WTC11 (cell line): ENCODE measurements at regions of chr9 and their contacts with region 1.

Region 1: GRCh38 chr9:131334629-131335367 is 45.3 kb downstream of the PLPP7 start:
- DNase-seq: peak; percentile 16
- ATAC-seq: peak; percentile 10; the same call in 1 of the 2 replicates
- H3K4me3 Mint-ChIP-seq: no peak overlapping the region
- H3K27ac Mint-ChIP-seq: no peak overlapping the region
- H3K4me1 Mint-ChIP-seq: peaks cover 23% of the 10 kb centered on the region
- H3K27me3 Mint-ChIP-seq: no peaks in the 10 kb centered on the region
- CTCF ChIP-seq: no peak

Region 2: DNA sequence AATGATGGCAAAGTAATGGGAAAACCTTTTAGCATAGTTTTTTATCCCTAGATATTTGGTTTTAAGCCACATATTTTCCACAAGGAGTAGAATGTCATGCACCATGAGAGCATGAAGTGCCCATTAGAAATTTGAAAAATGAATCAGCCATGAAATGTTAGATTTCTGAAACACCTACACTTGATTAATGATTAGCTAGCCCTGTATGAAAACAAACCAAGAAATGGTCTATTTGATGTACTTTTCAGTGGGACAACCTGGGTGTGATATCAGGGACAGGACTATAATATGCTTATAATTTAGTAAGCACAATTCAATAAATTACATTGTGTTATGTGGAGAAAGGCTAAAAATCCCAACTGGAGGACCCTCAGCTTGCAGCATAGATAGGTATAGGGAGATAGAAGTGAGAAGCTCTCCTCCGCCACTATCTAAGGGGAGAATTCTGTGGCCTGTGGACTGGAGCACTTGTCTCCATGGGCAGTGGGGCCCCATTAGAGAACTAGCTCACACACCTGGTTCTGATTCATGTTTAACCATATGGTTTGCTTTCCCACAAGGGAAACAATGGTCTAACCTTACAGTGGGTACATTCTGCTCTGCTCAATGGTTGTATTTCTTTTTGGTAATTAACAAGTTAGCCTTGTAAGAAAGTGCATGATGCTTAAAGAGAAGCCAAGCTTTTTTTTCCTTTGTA is 174.2 kb before region 1 on chr9:
- CTCF ChIA-PET with region 1: interaction called, 13 read pairs
- POLR2A ChIA-PET with region 1: no interaction called
- DNase-seq: no peak
- ATAC-seq: no peak
- H3K4me3 Mint-ChIP-seq: no peak overlapping the region
- H3K27ac Mint-ChIP-seq: no peak overlapping the region
- H3K4me1 Mint-ChIP-seq: no peaks in the 10 kb centered on the region
- H3K27me3 Mint-ChIP-seq: no peaks in the 10 kb centered on the region
- CTCF ChIP-seq: no peak

Region 3: DNA sequence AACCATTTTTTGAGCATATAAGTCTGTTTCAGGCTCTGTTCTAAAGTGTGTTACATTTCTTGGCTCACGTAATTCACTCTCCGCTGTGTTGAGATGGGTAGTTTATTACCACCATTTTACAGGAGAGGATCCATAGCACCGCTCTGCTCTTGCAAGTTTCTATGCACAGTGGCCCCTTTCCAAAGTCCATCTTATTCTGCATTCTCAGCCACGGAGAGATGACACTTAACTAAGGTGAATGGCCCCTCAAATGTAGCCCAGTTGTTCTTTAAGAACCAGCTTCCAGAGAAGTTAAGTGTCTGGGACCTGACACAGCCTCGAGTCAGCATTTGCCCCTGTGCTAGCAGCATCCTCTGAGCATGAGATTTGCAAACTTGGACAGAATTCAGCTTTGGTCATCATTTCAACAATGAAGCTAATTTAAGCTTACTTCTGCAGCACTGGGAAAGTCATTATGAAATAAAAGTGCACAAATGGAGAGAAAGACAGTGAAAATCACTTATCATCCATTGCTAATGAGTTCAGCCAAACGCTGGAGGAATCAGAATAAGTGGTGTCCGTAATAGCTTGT is 120.4 kb before region 1 on chr9:
- CTCF ChIA-PET with region 1: interaction called, 24 read pairs
- POLR2A ChIA-PET with region 1: no interaction called
- DNase-seq: no peak
- ATAC-seq: no peak
- H3K4me3 Mint-ChIP-seq: no peak overlapping the region
- H3K27ac Mint-ChIP-seq: no peak overlapping the region
- H3K4me1 Mint-ChIP-seq: peaks cover 11% of the 10 kb centered on the region
- H3K27me3 Mint-ChIP-seq: no peaks in the 10 kb centered on the region; the same call in 1 of the 2 replicates
- CTCF ChIP-seq: no peak

Region 4: DNA sequence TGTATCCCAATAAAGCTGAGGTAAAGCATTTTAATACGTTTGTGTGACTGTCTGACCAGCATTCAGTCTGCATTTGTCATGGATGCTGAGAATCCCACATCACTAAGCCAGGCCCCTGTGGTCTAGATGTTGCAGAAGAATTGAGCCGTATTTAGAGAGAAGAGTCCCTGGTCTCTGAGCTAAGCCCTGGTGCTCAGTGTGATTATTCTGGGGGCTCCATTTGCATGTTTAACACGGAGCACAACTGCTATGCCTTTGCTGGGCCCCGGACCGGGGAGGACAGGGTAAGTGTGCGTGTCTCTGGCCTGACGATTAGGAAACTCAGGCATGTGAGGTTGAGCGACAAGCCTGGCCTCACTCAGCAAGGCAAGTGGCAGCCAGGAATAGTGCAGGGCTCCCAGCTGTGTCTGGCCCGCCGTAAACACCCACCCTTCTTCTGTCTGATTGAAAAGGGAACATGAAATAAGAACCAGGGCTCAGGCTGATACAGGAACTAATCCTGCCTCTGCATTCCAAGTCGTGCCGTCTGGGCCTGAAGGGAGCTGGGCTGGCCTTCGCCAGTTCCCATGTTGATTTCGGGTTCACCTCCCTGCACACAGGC is 80.8 kb before region 1 on chr9:
- CTCF ChIA-PET with region 1: interaction called, 51 read pairs
- POLR2A ChIA-PET with region 1: interaction called, 3 read pairs
- DNase-seq: no peak
- ATAC-seq: peak; percentile 12; the same call in 1 of the 2 replicates
- H3K4me3 Mint-ChIP-seq: no peak overlapping the region
- H3K27ac Mint-ChIP-seq: peak overlapping the region; percentile 57
- H3K4me1 Mint-ChIP-seq: peaks cover 6% of the 10 kb centered on the region
- H3K27me3 Mint-ChIP-seq: no peaks in the 10 kb centered on the region
- CTCF ChIP-seq: no peak

Region 5: DNA sequence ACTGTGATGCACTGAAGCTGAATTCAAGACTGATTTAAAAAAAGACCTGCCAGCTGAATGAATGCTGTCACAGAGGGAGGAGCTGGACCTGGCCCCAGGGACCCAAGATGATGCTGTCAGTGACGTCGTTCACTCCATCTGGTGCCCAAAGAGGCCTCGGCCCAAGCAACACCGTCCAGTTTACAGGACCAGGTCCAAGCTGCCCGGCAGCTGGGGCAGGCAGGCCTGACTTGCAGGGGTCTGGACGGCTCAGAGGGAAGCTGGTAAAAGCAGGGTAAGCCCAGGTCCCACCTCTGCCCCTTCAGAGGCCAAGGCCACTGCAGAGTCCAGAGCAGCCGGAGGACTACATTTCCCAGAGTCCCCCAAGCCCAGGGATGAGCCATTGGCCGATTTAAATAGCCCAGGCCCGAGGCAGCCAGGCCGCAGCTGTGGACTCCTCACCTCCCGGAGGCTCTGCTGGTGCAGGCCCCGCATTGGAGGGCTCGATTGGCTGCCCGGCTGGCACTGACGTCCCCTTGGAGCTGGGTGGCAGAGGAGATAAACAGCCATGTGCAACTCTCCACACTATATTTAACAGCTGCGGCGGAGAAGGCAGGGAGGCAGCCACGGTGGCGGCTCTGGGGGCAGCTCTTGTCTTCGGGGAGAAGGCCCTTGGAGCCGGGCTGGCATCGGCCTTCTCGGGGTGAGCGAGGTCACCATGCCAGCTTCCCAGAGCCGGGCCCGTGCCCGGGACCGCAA is 45.3 kb before region 1 on chr9 and contains the start of gene PLPP7:
- CTCF ChIA-PET with region 1: interaction called, 44 read pairs
- POLR2A ChIA-PET with region 1: no interaction called
- DNase-seq: peak; percentile 75
- ATAC-seq: peak; percentile 97
- H3K4me3 Mint-ChIP-seq: peak within 1 kb of the TSS; percentile 36; the same call in 1 of the 2 replicates
- H3K27ac Mint-ChIP-seq: peak within 1 kb of the TSS; percentile 41; the same call in 1 of the 2 replicates
- H3K4me1 Mint-ChIP-seq: peaks cover 10% of the 10 kb centered on the region
- H3K27me3 Mint-ChIP-seq: peaks cover 3% of the 10 kb centered on the region; the same call in 1 of the 2 replicates
- CTCF ChIP-seq: no peak
- total RNA-seq, gene PLPP7: 4.2 to 4.9 TPM (median 4.7 TPM) in 3 replicates

Region 6: GRCh38 chr9:131310833-131311554 is 23.8 kb before region 1 on chr9:
- CTCF ChIA-PET with region 1: interaction called, 13 read pairs
- POLR2A ChIA-PET with region 1: no interaction called
- DNase-seq: no peak
- ATAC-seq: peak; percentile 49
- H3K4me3 Mint-ChIP-seq: no peak overlapping the region
- H3K27ac Mint-ChIP-seq: no peak overlapping the region
- H3K4me1 Mint-ChIP-seq: peaks cover 4% of the 10 kb centered on the region; the same call in 1 of the 2 replicates
- H3K27me3 Mint-ChIP-seq: no peaks in the 10 kb centered on the region
- CTCF ChIP-seq: no peak

Region 7: GRCh38 chr9:131892151-131892707 is 557.4 kb after region 1 on chr9:
- CTCF ChIA-PET with region 1: no interaction called
- POLR2A ChIA-PET with region 1: no interaction called
- DNase-seq: no peak
- ATAC-seq: no peak
- H3K4me3 Mint-ChIP-seq: no peak overlapping the region
- H3K27ac Mint-ChIP-seq: no peak overlapping the region
- H3K4me1 Mint-ChIP-seq: peaks cover 75% of the 10 kb centered on the region
- H3K27me3 Mint-ChIP-seq: no peaks in the 10 kb centered on the region
- CTCF ChIP-seq: no peak